Right ventricle myocardium inferior (tissue), 1 donor: ENCODE measurements at regions of chrX and their contacts with region 1.

Region 1: GRCh38 chrX:103464774-103465117 is 54.5 kb downstream of the RAB40A start:
- DNase-seq: no peak
- ATAC-seq: peak; percentile 88

Region 2: DNA sequence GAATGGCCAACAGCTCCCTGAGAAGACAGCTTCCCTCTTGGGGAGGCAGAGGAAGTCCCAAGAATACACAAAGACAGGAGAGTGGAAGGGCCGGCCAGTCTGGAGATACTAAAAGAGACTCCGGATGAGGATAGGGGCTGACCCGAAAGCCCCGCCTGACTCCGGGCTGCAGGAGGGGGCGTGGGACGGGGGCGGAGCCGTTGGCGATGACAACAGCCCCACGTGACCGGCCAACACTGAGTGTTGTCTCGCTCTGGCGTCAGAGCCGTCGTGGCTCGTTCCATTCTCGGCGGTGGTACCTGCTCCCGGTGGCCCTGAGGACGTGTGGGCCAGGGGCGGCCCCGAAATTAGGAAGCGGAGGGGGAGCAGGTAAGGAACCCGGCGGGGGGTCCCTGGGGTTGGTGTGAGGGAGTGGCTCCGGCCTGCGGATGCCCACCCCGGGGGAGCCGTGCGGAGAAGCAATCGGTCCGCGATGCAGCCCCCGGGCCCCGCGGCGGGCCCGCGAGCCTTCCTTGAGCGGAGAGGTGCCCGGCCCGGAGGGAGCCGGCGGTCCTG is 249.8 kb before region 1 on chrX and contains the start of gene BEX4:
- intact Hi-C with region 1: loop called (anchors 2 kb)
- DNase-seq: peak; percentile 89
- ATAC-seq: peak; percentile 99
- total RNA-seq, gene BEX4: 30.3 TPM

Region 3: GRCh38 chrX:103343105-103343504 is 121.6 kb before region 1 on chrX:
- intact Hi-C with region 1: loop called (anchors 1 kb)
- DNase-seq: no peak
- ATAC-seq: no peak

Region 4: GRCh38 chrX:103431316-103431715 is 33.4 kb before region 1 on chrX:
- intact Hi-C with region 1: no loop called
- DNase-seq: no peak
- ATAC-seq: no peak